GM18951 (cell line): ENCODE measurements at regions of chr16 and their contacts with region 1.

Region 1: GRCh38 chr16:84726079-84726668 is 26.4 kb downstream of the USP10 start:
- POLR2A ChIP-seq: no peak

Region 2: GRCh38 chr16:83458612-83459011 is 1267.6 kb before region 1 on chr16:
- in situ Hi-C with region 1: no loop called
- POLR2A ChIP-seq: no peak

Region 3: GRCh38 chr16:84633622-84634021 is 92.6 kb before region 1 on chr16:
- in situ Hi-C with region 1: loop called (anchors 10 kb)
- POLR2A ChIP-seq: no peak

Region 4: DNA sequence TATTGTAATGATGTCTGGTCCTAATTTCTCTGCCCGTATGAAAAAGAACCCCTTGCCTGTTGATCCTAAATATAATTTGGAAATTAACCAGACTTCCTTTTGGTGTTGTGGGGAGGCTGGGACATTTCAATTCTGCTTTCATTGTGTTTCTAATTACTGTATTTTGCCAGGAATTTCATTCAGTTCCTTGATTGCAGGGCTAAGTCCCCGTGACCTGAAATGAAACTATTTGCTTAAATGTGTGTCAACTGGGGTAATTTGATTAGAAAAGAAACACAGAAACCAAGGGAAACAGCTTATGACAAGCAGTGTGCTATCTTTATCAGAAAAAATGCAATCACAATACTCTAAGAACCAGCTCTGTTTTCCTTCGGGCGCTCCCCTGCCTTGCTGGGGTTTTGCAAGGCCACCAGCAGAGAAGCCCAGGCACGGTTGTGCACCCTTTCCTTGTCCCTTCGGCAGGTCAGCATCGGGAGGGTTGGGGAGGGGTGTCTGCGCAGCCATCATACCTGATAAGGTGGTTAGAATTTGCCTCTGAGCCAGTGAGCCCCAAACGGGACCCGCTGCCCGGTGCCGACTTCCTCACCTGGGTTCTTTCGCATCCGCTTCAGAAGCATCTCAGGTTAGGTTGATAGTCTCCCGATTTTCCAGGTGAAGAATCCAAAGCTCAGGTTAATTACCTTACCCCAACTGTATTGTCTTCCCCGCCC is 58.4 kb before region 1 on chr16:
- in situ Hi-C with region 1: loop called (anchors 5 kb)
- POLR2A ChIP-seq: no peak